K562 (cell line): ENCODE measurements at regions of chr7 and their contacts with region 1.

Region 1: GRCh38 chr7:39517240-39517639 is 49.0 kb upstream of the YAE1 start:
- DNase-seq: no peak
- ATAC-seq: no peak
- H3K4me3 ChIP-seq: no peak overlapping the region
- H3K27ac ChIP-seq: no peak overlapping the region
- H3K4me1 ChIP-seq: no peaks in the 10 kb centered on the region; a peak in 1 of 5 replicates
- H3K27me3 ChIP-seq: peaks cover 8 to 22% of the 10 kb centered on the region in 2 experiments; a peak in 3 of 5 replicates
- CTCF ChIP-seq: no peak
- EP300 ChIP-seq: no peak
- POLR2A ChIP-seq: no peak
- RAD21 ChIP-seq: no peak

Region 2: DNA sequence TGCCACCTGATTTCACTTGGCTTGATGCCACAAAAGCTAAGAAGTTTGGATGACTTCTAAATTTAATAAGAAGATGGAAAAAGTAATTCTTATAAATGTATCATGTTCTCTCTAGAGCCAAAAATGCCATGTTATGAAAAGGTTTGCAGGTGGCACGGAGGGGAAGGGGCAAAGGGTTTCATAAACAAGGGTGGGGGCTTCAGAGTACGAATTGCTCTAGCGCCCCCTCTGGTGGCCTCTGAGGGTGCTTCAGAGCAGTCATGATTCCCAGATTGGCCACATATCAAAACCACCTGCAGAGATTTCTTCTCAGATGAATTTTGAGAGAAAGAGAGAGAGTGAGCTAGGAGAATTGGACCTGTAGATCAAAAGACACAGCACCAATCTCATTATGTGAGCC is 159.6 kb before region 1 on chr7:
- CTCF ChIA-PET with region 1: no interaction called
- POLR2A ChIA-PET with region 1: no interaction called
- in situ Hi-C with region 1: no loop called
- intact Hi-C with region 1: no loop called
- DNase-seq: peak; percentile 18 to 61 (median 47)
- ATAC-seq: peak; percentile 63; the same call in 2 of the 3 replicates
- H3K4me3 ChIP-seq: no peak overlapping the region
- H3K27ac ChIP-seq: no peak overlapping the region
- H3K4me1 ChIP-seq: no peaks in the 10 kb centered on the region
- H3K27me3 ChIP-seq: peaks cover 4 to 8% of the 10 kb centered on the region in 2 experiments; a peak in 3 of 5 replicates
- CTCF ChIP-seq: peak; percentile 46 to 73 (median 47); a peak in 5 of 6 replicates
- EP300 ChIP-seq: no peak
- POLR2A ChIP-seq: no peak
- RAD21 ChIP-seq: peak in 1 of 2 experiments; percentile 17; a peak in 2 of 4 replicates

Region 3: GRCh38 chr7:39453743-39454355 is 63.4 kb before region 1 on chr7:
- CTCF ChIA-PET with region 1: interaction called, 9 read pairs
- POLR2A ChIA-PET with region 1: no interaction called
- in situ Hi-C with region 1: no loop called
- intact Hi-C with region 1: loop called (anchors 1 kb)
- DNase-seq: peak; percentile 51 to 74 (median 54)
- ATAC-seq: peak; percentile 93
- H3K4me3 ChIP-seq: no peak overlapping the region
- H3K27ac ChIP-seq: no peak overlapping the region
- H3K4me1 ChIP-seq: peaks cover 0 to 5% of the 10 kb centered on the region in 2 experiments; a peak in 1 of 5 replicates
- H3K27me3 ChIP-seq: peaks cover 0 to 5% of the 10 kb centered on the region in 2 experiments; a peak in 1 of 5 replicates
- CTCF ChIP-seq: peak; percentile 76 to 85 (median 80)
- EP300 ChIP-seq: no peak
- POLR2A ChIP-seq: no peak
- RAD21 ChIP-seq: peak; percentile 43 to 67